ENCODE measurements at regions of chr17 and their contacts with region 1.

Region 1: GRCh38 chr17:6651357-6651918 is at the starts of genes C17orf100 and MED31:
- DNase-seq: peak; percentile 89 to 97 (median 93)
- ATAC-seq: peak; percentile 96
- H3K4me3 ChIP-seq: peak within 1 kb of the TSS; percentile 99
- H3K4me3 Mint-ChIP-seq: peak within 1 kb of the TSS; percentile 89 to 100 (median 96)
- H3K27ac ChIP-seq: peak within 1 kb of the TSS; percentile 95
- H3K27ac Mint-ChIP-seq: peak within 1 kb of the TSS; percentile 97 to 100 (median 99)
- H3K4me1 ChIP-seq: peaks cover 21 to 26% of the 10 kb centered on the region in 2 donors
- H3K4me1 Mint-ChIP-seq: peaks cover 37 to 87% (median 78%) of the 10 kb centered on the region in 7 donors
- H3K27me3 ChIP-seq: no peaks in the 10 kb centered on the region
- H3K27me3 Mint-ChIP-seq: peaks cover 0 to 29% (median 0%) of the 10 kb centered on the region in 5 donors
- total RNA-seq, gene C17orf100: 1.9 to 6.1 (median 1.9) TPM
- total RNA-seq, gene MED31: 21.4 to 41.2 (median 28.2) TPM

Region 2: DNA sequence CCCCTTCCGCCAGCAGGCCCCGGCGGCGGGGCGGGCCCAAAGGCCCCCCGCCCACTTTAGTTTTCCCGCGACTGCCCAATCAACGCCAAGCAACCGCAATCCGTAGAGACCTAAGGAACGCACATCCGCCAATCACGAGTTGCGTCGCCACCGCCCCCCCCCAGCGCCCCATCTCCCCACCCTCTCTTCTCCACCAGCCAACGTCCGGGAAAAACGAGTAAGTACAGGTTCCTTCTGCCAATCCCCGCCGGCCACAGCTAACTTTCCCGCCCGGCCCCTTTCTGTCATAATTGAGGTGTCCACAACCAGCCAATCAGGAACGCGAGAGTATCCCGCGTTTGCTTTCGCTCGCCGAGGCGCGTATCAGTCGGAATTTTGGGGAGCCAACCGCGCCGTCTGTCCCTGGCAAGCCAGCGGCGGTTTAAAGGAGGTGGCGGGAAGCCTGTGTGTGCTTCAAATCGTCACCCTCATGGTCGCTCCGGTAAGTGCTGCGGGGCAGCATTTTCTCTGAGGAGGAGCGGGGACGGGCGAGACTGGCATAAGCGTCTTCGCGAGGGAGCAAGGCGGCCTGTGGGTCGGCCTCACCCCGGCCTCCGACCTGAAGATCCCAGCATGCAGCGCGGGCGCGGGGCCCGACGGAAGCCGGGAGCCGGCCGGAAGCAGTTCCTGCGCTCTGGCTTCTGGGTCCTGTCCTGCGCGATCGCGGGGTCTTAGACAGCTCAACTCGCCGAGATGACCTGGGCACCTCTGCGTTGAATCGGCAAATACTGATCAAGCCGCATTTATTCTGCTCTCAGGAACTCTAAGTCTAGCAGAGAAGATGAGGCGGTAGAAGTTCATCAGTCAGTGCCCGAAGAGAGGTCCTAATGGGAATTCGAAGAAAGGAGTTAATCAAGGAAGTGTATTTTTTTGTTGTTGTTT is 1165.0 kb before region 1 on chr17 and contains the start of gene MIS12:
- CTCF ChIA-PET with region 1: no interaction called
- POLR2A ChIA-PET with region 1: no interaction called
- intact Hi-C with region 1: loop called (anchors 5 kb)
- DNase-seq: peak; percentile 78 to 100 (median 97)
- ATAC-seq: peak; percentile 93
- H3K4me3 ChIP-seq: peak within 1 kb of the TSS; percentile 94
- H3K4me3 Mint-ChIP-seq: peak within 1 kb of the TSS; percentile 88 to 97 (median 94)
- H3K27ac ChIP-seq: peak within 1 kb of the TSS; percentile 98
- H3K27ac Mint-ChIP-seq: peak within 1 kb of the TSS; percentile 95 to 99 (median 98)
- H3K4me1 ChIP-seq: peaks cover 21 to 28% of the 10 kb centered on the region in 2 donors
- H3K4me1 Mint-ChIP-seq: peaks cover 22 to 77% (median 66%) of the 10 kb centered on the region in 7 donors
- H3K27me3 ChIP-seq: no peaks in the 10 kb centered on the region
- H3K27me3 Mint-ChIP-seq: no peaks in the 10 kb centered on the region
- total RNA-seq, gene MIS12: 16.3 to 53.6 (median 38.4) TPM

Region 3: DNA sequence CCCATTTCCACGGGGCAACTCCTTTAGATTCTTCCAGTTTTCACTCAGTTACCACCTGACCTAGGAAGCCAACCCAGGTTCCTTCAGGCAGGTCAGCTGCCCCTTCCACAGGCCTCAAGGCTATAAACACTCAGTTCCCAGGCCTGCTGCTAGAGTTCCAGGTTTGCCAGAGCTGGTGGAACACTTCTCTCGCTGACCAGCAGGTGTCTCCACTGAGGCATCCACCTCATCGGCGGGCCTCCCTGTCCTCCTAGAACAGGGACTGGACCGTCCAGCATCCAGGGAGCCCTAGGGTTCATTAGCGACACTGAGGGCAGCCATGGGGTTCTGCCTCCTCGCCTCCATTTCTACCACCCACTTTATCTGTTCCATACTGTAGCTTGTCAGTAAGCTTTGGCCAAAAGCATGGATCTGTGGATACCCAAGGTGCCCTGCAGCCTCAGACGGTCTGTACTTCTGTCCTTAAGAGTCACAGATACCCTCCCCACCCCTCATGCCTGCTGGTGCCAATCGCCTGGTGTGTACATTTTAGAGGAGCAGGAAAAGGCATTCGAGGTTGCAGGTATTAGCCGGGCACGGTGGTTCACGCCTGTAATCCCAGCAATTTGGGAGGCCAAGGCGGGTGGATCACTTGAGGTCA is 178.2 kb before region 1 on chr17:
- CTCF ChIA-PET with region 1: interaction called, 3 read pairs
- POLR2A ChIA-PET with region 1: no interaction called
- intact Hi-C with region 1: loop called in 1 of 2 experiments (anchors 2 kb)
- DNase-seq: peak; percentile 16 to 68 (median 57)
- ATAC-seq: peak; percentile 85
- H3K4me3 ChIP-seq: no peak overlapping the region
- H3K4me3 Mint-ChIP-seq: no peak overlapping the region
- H3K27ac ChIP-seq: no peak overlapping the region
- H3K27ac Mint-ChIP-seq: peak overlapping the region in 3 of 9 donors; percentile 22 to 62 (median 47)
- H3K4me1 ChIP-seq: no peaks in the 10 kb centered on the region
- H3K4me1 Mint-ChIP-seq: peaks cover 1 to 6% (median 4%) of the 10 kb centered on the region in 7 donors
- H3K27me3 ChIP-seq: no peaks in the 10 kb centered on the region
- H3K27me3 Mint-ChIP-seq: peaks cover 0 to 6% (median 0%) of the 10 kb centered on the region in 5 donors

Region 4: GRCh38 chr17:6487251-6488007 is 164.0 kb before region 1 on chr17:
- CTCF ChIA-PET with region 1: no interaction called
- POLR2A ChIA-PET with region 1: no interaction called
- intact Hi-C with region 1: no loop called
- DNase-seq: no peak
- ATAC-seq: no peak
- H3K4me3 ChIP-seq: no peak overlapping the region
- H3K4me3 Mint-ChIP-seq: no peak overlapping the region
- H3K27ac ChIP-seq: no peak overlapping the region
- H3K27ac Mint-ChIP-seq: no peak overlapping the region
- H3K4me1 ChIP-seq: no peaks in the 10 kb centered on the region
- H3K4me1 Mint-ChIP-seq: peaks cover 0 to 2% (median 0%) of the 10 kb centered on the region in 7 donors
- H3K27me3 ChIP-seq: no peaks in the 10 kb centered on the region
- H3K27me3 Mint-ChIP-seq: peaks cover 0 to 10% (median 5%) of the 10 kb centered on the region in 5 donors

Region 5: DNA sequence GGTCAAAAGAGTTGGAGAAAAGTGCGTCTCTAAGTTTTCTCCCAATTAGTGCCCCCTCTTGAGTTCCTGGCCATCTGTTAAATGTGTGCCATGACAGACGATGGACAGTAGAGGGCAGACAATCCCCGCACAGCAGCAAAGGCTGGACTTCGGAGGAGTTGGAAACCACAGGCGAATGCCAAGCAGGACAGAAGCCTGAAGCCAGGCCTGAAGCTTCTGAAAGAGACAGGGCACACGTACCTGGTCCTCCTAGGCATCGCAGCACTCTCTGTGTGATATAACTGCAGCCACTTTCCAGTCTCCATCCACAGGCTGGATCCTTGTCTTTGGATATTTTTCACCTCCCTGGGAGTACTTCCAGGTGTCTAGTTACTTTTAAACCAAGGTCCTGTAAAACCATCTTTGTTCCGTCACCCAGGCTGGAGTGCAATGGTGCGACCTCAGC is 14.7 kb after region 1 on chr17:
- CTCF ChIA-PET with region 1: no interaction called
- POLR2A ChIA-PET with region 1: no interaction called
- intact Hi-C with region 1: loop called in 1 of 2 experiments (anchors 1 kb)
- DNase-seq: peak in 3 of 9 donors; percentile 22 to 34 (median 24)
- ATAC-seq: peak; percentile 87
- H3K4me3 ChIP-seq: no peak overlapping the region
- H3K4me3 Mint-ChIP-seq: no peak overlapping the region
- H3K27ac ChIP-seq: no peak overlapping the region
- H3K27ac Mint-ChIP-seq: no peak overlapping the region
- H3K4me1 ChIP-seq: no peaks in the 10 kb centered on the region
- H3K4me1 Mint-ChIP-seq: peaks cover 5 to 25% (median 10%) of the 10 kb centered on the region in 7 donors
- H3K27me3 ChIP-seq: no peaks in the 10 kb centered on the region
- H3K27me3 Mint-ChIP-seq: peaks cover 0 to 15% (median 0%) of the 10 kb centered on the region in 5 donors

Region 6: DNA sequence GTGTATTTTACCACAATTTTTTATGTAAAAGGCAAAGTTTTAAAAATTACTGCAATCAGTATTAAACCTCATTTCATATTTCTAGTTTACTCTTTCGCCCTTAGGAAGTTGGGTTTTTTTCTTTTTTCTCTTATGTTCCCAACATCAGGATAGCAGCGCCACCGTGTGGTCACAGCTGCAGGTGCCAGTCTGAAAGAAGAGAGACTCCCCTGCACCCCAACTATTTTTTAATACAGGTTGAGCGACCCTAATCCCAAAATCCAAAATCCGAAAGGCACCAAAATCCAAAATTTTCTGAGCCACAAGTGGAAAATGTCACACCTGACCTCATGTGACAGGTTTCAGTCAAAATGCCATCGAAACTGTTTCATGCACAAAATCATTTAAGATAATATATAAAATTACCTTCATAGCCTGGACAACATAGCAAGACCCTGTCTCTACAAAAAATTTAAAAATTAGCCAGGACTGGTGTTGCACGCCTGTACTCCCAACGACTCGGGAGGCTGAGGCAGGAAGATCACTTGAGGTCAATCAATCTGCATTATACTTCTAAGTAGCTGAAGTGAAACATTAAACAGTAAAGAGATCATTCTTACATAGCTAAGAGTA is 484.9 kb after region 1 on chr17:
- CTCF ChIA-PET with region 1: no interaction called
- POLR2A ChIA-PET with region 1: no interaction called
- intact Hi-C with region 1: loop called in 1 of 2 experiments (anchors 5 kb)
- DNase-seq: peak; percentile 53 to 74 (median 71)
- ATAC-seq: peak; percentile 24
- H3K4me3 ChIP-seq: no peak overlapping the region
- H3K4me3 Mint-ChIP-seq: peak overlapping the region in 4 of 10 donors; percentile 32 to 53 (median 44)
- H3K27ac ChIP-seq: no peak overlapping the region
- H3K27ac Mint-ChIP-seq: peak overlapping the region in 4 of 9 donors; percentile 8 to 48 (median 28)
- H3K4me1 ChIP-seq: peaks cover 6 to 20% of the 10 kb centered on the region in 2 donors
- H3K4me1 Mint-ChIP-seq: peaks cover 13 to 34% (median 23%) of the 10 kb centered on the region in 7 donors
- H3K27me3 ChIP-seq: no peaks in the 10 kb centered on the region
- H3K27me3 Mint-ChIP-seq: peaks cover 0 to 24% (median 6%) of the 10 kb centered on the region in 5 donors

Region 7: GRCh38 chr17:7844292-7845154 is 1193.1 kb after region 1 on chr17:
- CTCF ChIA-PET with region 1: no interaction called
- POLR2A ChIA-PET with region 1: no interaction called
- intact Hi-C with region 1: loop called in 1 of 2 experiments (anchors 5 kb)
- DNase-seq: peak; percentile 74 to 87 (median 79)
- ATAC-seq: peak; percentile 42
- H3K4me3 ChIP-seq: peak overlapping the region; percentile 84
- H3K4me3 Mint-ChIP-seq: peak overlapping the region; percentile 85 to 99 (median 94)
- H3K27ac ChIP-seq: peak overlapping the region; percentile 100
- H3K27ac Mint-ChIP-seq: peak overlapping the region; percentile 90 to 100 (median 99)
- H3K4me1 ChIP-seq: peaks cover 11 to 26% of the 10 kb centered on the region in 2 donors
- H3K4me1 Mint-ChIP-seq: peaks cover 19 to 41% (median 29%) of the 10 kb centered on the region in 7 donors
- H3K27me3 ChIP-seq: no peaks in the 10 kb centered on the region
- H3K27me3 Mint-ChIP-seq: peaks cover 0 to 2% (median 0%) of the 10 kb centered on the region in 5 donors